CD14-positive monocyte (primary cell): ENCODE measurements at regions of chr15 and their contacts with region 1.

Region 1: GRCh38 chr15:22866079-22866478 is 27.6 kb downstream of the NIPA2 start:
- DNase-seq: no peak
- H3K4me3 ChIP-seq: no peak overlapping the region
- H3K4me3 Mint-ChIP-seq: no peak overlapping the region
- H3K27ac ChIP-seq: no peak overlapping the region
- H3K27ac Mint-ChIP-seq: no peak overlapping the region
- H3K4me1 ChIP-seq: no peaks in the 10 kb centered on the region
- H3K4me1 Mint-ChIP-seq: no peaks in the 10 kb centered on the region
- H3K27me3 ChIP-seq: no peaks in the 10 kb centered on the region
- H3K27me3 Mint-ChIP-seq: peaks cover 0 to 1% (median 0%) of the 10 kb centered on the region in 3 donors
- CTCF ChIP-seq: no peak

Region 2: GRCh38 chr15:22735781-22736180 is 130.3 kb before region 1 on chr15:
- intact Hi-C with region 1: no loop called
- DNase-seq: no peak
- H3K4me3 ChIP-seq: no peak overlapping the region
- H3K4me3 Mint-ChIP-seq: no peak overlapping the region
- H3K27ac ChIP-seq: no peak overlapping the region
- H3K27ac Mint-ChIP-seq: no peak overlapping the region
- H3K4me1 ChIP-seq: no peaks in the 10 kb centered on the region
- H3K4me1 Mint-ChIP-seq: no peaks in the 10 kb centered on the region
- H3K27me3 ChIP-seq: no peaks in the 10 kb centered on the region
- H3K27me3 Mint-ChIP-seq: peaks cover 0 to 5% (median 4%) of the 10 kb centered on the region in 3 donors
- CTCF ChIP-seq: no peak

Region 3: GRCh38 chr15:22806664-22807063 is 59.4 kb before region 1 on chr15:
- intact Hi-C with region 1: loop called in 1 of 2 experiments (anchors 10 kb)
- DNase-seq: no peak
- H3K4me3 ChIP-seq: no peak overlapping the region
- H3K4me3 Mint-ChIP-seq: no peak overlapping the region
- H3K27ac ChIP-seq: no peak overlapping the region
- H3K27ac Mint-ChIP-seq: no peak overlapping the region
- H3K4me1 ChIP-seq: no peaks in the 10 kb centered on the region
- H3K4me1 Mint-ChIP-seq: no peaks in the 10 kb centered on the region
- H3K27me3 ChIP-seq: no peaks in the 10 kb centered on the region
- H3K27me3 Mint-ChIP-seq: peaks cover 0 to 2% (median 0%) of the 10 kb centered on the region in 3 donors
- CTCF ChIP-seq: no peak

Region 4: DNA sequence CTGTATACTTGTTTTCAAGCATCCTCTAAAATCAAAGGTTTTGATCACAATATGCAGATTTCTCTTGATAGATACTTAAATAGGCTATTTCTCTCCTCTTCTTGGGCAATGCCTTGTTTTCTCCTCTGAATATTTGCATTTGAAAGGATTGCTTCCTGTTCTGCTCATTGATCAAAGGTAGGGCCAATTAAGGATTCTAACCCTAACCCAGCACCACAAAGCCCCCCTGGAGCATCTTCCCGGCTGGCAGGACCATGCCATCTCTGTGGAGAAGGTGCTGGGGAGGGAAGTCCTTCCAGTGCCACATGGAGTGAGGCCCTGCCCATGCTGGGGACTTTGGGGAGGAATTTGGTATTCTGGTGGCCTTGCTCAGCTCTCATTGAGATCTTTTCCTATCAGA is 39.0 kb before region 1 on chr15:
- intact Hi-C with region 1: no loop called
- DNase-seq: no peak
- H3K4me3 ChIP-seq: no peak overlapping the region
- H3K4me3 Mint-ChIP-seq: no peak overlapping the region
- H3K27ac ChIP-seq: no peak overlapping the region
- H3K27ac Mint-ChIP-seq: no peak overlapping the region
- H3K4me1 ChIP-seq: no peaks in the 10 kb centered on the region
- H3K4me1 Mint-ChIP-seq: no peaks in the 10 kb centered on the region
- H3K27me3 ChIP-seq: no peaks in the 10 kb centered on the region
- H3K27me3 Mint-ChIP-seq: no peaks in the 10 kb centered on the region
- CTCF ChIP-seq: no peak

Region 5: GRCh38 chr15:22922003-22922402 is 55.9 kb after region 1 on chr15:
- intact Hi-C with region 1: no loop called
- DNase-seq: no peak
- H3K4me3 ChIP-seq: no peak overlapping the region
- H3K4me3 Mint-ChIP-seq: no peak overlapping the region
- H3K27ac ChIP-seq: no peak overlapping the region
- H3K27ac Mint-ChIP-seq: no peak overlapping the region
- H3K4me1 ChIP-seq: no peaks in the 10 kb centered on the region
- H3K4me1 Mint-ChIP-seq: no peaks in the 10 kb centered on the region
- H3K27me3 ChIP-seq: no peaks in the 10 kb centered on the region
- H3K27me3 Mint-ChIP-seq: peaks cover 0 to 2% (median 0%) of the 10 kb centered on the region in 3 donors
- CTCF ChIP-seq: no peak